ENCODE measurements at regions of chr6 and their contacts with region 1.

Region 1: GRCh38 chr6:11654876-11655275 is 117.3 kb downstream of the TMEM170B start:
- DNase-seq: no peak
- H3K4me3 Mint-ChIP-seq: no peak overlapping the region
- H3K27ac Mint-ChIP-seq: no peak overlapping the region
- H3K4me1 Mint-ChIP-seq: peaks cover 20% of the 10 kb centered on the region
- H3K27me3 Mint-ChIP-seq: no peaks in the 10 kb centered on the region

Region 2: DNA sequence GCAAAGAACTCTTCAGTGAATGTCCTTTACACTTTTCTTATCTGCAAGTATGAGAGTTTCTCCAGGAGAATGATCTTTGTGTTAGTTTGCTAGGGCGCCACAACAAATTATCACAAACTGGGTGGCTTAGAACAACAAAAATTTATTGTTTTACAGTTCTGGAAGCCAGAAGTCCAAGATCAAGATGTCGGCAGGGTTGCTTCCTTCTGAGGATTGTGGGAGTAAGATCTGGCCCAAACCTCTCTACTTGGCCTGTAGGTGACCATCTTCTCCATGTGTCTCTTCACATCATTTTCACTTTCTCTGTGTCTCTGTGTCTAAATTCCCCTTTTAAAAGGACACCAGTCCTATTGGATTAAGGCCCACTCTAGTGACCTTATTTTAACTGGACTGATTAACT is 20.7 kb after region 1 on chr6:
- intact Hi-C with region 1: no loop called
- DNase-seq: no peak
- H3K4me3 Mint-ChIP-seq: no peak overlapping the region
- H3K27ac Mint-ChIP-seq: no peak overlapping the region
- H3K4me1 Mint-ChIP-seq: no peaks in the 10 kb centered on the region
- H3K27me3 Mint-ChIP-seq: peaks cover 3% of the 10 kb centered on the region

Region 3: GRCh38 chr6:11900662-11901598 is 246.1 kb after region 1 on chr6:
- intact Hi-C with region 1: no loop called
- DNase-seq: no peak
- H3K4me3 Mint-ChIP-seq: peak overlapping the region; percentile 4
- H3K27ac Mint-ChIP-seq: no peak overlapping the region
- H3K4me1 Mint-ChIP-seq: peaks cover 21% of the 10 kb centered on the region
- H3K27me3 Mint-ChIP-seq: peaks cover 8% of the 10 kb centered on the region

Region 4: DNA sequence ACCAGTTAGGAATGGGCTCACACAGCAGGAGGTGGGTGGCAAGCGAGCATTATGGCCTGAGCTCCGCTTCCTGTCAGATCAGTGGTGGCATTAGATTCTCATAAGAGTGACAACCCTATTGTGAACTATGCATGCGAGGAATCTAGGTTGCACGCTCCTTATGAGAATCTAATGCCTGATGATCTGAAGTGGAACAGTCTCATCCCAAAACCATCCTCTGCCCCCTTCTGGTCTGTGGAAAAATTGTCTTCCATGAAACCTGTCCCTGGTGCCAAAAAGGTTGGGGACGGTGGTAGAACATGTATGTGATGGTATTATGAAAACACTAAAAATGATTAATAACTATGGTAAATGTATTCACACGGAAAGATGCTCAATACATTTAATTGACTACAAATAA is 257.6 kb after region 1 on chr6:
- intact Hi-C with region 1: loop called (anchors 5 kb)
- DNase-seq: no peak
- H3K4me3 Mint-ChIP-seq: no peak overlapping the region
- H3K27ac Mint-ChIP-seq: no peak overlapping the region
- H3K4me1 Mint-ChIP-seq: peaks cover 14% of the 10 kb centered on the region
- H3K27me3 Mint-ChIP-seq: no peaks in the 10 kb centered on the region

Region 5: DNA sequence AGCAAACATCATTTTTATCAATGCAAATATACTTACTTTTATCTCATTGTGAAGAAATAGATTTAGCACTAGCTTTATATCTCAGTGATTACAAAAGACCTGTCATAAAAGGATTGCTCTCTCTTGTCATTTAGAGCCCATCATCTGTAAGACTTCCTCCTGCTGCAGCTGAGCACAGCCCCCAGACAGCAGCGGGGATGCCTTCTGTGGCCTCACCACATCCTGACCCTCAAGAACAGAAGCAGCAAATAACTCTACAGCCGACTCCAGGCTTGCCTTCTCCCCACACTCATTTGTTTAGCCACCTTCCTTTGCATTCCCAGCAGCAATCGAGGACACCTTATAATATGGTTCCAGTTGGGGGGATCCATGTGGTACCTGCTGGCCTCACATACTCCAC is 508.3 kb after region 1 on chr6:
- intact Hi-C with region 1: loop called (anchors 5 kb)
- DNase-seq: peak; percentile 53
- H3K4me3 Mint-ChIP-seq: peak overlapping the region; percentile 57
- H3K27ac Mint-ChIP-seq: peak overlapping the region; percentile 54
- H3K4me1 Mint-ChIP-seq: peaks cover 41% of the 10 kb centered on the region
- H3K27me3 Mint-ChIP-seq: no peaks in the 10 kb centered on the region

Region 6: GRCh38 chr6:12289933-12290820 is 635.3 kb after region 1 on chr6 and contains the start of gene EDN1:
- intact Hi-C with region 1: loop called (anchors 1 kb)
- DNase-seq: peak; percentile 50
- H3K4me3 Mint-ChIP-seq: peak within 1 kb of the TSS; percentile 81
- H3K27ac Mint-ChIP-seq: no peak within 1 kb of the TSS
- H3K4me1 Mint-ChIP-seq: peaks cover 18% of the 10 kb centered on the region
- H3K27me3 Mint-ChIP-seq: peaks cover 34% of the 10 kb centered on the region
- total RNA-seq, gene EDN1: 0.12 and 0.36 TPM in 2 replicates

Region 7: DNA sequence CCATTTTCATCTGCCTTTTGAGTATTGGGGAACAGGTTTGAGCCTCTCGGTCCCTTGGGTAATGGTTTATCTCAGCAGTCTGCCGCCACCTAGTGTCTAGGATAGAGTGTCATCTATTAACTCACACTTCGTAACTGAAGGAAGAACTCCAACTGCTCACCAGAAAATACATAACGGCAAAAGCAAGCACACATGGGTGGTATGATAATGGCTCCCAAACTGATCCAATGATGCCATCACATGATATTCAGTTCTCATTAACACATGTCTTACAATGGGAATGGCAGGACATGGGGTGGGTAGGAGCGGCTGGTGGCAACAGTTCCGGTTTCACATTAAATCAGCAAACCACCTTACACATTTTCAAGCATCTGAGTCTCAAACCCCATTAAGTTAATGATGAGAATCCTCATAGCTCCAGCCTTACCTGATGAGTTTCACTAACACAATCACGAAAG is 951.0 kb after region 1 on chr6:
- intact Hi-C with region 1: loop called (anchors 1 kb)
- DNase-seq: peak; percentile 20
- H3K4me3 Mint-ChIP-seq: no peak overlapping the region
- H3K27ac Mint-ChIP-seq: no peak overlapping the region
- H3K4me1 Mint-ChIP-seq: peaks cover 30% of the 10 kb centered on the region
- H3K27me3 Mint-ChIP-seq: no peaks in the 10 kb centered on the region